Body of pancreas (tissue), 4 donors: ENCODE measurements at regions of chr17 and their contacts with region 1.

Region 1: GRCh38 chr17:14300575-14301278 is at the start of gene HS3ST3B1:
- DNase-seq: peak; percentile 96 to 99 (median 98)
- ATAC-seq: peak; percentile 92
- H3K4me3 ChIP-seq: peak within 1 kb of the TSS; percentile 22 to 61
- H3K27ac ChIP-seq: peak within 1 kb of the TSS in 3 of 4 donors; percentile 68 to 85 (median 73)
- H3K4me1 ChIP-seq: peaks cover 69% of the 10 kb centered on the region
- H3K27me3 ChIP-seq: peaks cover 0 to 41% of the 10 kb centered on the region in 2 donors
- CTCF ChIP-seq: peak in 3 of 7 experiments; percentile 34 to 45 (median 38)
- POLR2A ChIP-seq: peak; percentile 36 to 83 (median 83)
- total RNA-seq, gene HS3ST3B1: 0.99 to 1.6 TPM

Region 2: DNA sequence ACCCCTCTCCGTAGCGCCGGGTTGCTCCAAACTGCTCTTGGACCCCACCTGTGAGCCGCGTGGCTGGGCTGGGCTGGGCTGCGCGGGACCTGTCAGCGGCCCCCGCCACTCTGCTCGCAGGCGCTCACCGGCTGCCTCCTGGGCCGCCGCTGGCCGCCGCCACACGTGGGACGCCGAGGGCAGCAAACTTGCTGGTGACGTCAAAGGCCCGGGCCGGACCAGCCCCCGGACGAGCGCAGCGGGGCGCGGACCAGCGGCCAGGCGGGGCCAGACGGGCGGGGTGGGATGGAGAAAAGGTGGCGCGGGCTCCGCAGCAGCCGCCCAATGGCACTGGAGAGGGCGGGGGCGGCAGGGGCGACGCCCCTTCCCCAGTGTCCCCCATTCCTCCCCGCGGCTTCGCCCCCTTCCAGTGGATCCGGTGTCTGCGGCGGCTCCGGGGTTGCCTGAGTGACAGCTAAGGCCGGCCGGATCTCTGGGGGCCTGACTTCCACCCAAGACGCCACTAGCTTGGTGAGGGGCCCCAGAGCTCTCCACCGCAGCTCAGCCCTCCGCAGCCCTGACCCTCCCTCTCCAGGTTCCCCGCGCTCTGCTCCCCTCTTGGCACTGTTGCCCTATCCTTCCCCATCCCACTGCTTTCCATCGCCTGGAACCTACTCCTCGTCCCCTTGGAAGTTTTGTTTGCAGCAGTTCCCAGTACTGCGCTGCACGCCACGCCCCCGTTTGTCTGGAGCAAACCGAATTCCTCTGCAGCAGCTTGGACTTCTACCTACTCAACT is 698.8 kb before region 1 on chr17 and contains the start of gene HS3ST3A1:
- intact Hi-C with region 1: loop called (anchors 5 kb)
- DNase-seq: peak in 2 of 4 donors; percentile 10 to 34
- ATAC-seq: peak; percentile 50
- H3K4me3 ChIP-seq: no peak within 1 kb of the TSS
- H3K27ac ChIP-seq: no peak within 1 kb of the TSS
- H3K4me1 ChIP-seq: peaks cover 21% of the 10 kb centered on the region
- H3K27me3 ChIP-seq: peaks cover 0 to 21% of the 10 kb centered on the region in 2 donors
- CTCF ChIP-seq: no peak
- POLR2A ChIP-seq: no peak
- total RNA-seq, gene HS3ST3A1: not detected

Region 3: GRCh38 chr17:14499976-14500375 is 199.2 kb after region 1 on chr17:
- intact Hi-C with region 1: no loop called
- DNase-seq: no peak
- ATAC-seq: no peak
- H3K4me3 ChIP-seq: no peak overlapping the region
- H3K27ac ChIP-seq: no peak overlapping the region
- H3K4me1 ChIP-seq: no peaks in the 10 kb centered on the region
- H3K27me3 ChIP-seq: no peaks in the 10 kb centered on the region
- CTCF ChIP-seq: no peak
- POLR2A ChIP-seq: no peak

Region 4: DNA sequence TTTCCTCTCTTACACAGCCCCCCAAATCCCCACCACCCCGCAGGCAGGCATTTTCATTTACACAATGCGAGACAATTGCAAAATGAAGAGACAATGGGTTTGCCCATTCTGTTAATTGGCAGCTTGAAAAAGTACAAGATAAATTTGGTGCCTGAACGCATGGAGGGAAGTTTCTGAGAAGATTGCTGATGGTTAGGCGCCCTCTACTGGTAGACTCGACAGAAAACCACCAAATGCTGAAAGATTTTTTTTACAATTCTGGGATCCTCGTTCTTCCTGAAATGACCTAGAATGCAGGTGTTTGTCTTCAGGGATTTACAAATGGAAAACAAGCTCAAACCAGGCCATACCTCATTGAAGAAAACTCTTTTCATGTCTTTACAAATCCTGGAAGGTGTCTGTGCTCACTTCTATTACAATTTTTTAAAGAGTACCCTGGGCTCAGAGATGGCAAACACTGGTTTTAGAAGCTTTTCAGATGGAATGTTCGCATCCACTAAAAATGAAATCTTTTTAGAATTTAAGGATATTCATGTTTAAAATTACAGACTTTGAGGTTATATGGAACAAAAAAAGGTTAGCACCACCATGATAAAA is 625.9 kb after region 1 on chr17:
- intact Hi-C with region 1: loop called (anchors 5 kb)
- DNase-seq: peak; percentile 65 to 75 (median 70)
- ATAC-seq: peak; percentile 33
- H3K4me3 ChIP-seq: no peak overlapping the region
- H3K27ac ChIP-seq: no peak overlapping the region
- H3K4me1 ChIP-seq: peaks cover 19% of the 10 kb centered on the region
- H3K27me3 ChIP-seq: no peaks in the 10 kb centered on the region
- CTCF ChIP-seq: peak; percentile 55 to 87 (median 78)
- POLR2A ChIP-seq: no peak